Naive thymus-derived CD4-positive, alpha-beta T cell (primary cell): ENCODE measurements at regions of chr12 and their contacts with region 1.

Region 1: GRCh38 chr12:127496255-127496654 is 770.7 kb upstream of the TMEM132C start:
- DNase-seq: no peak
- ATAC-seq: no peak
- H3K4me3 ChIP-seq: no peak overlapping the region
- H3K4me3 Mint-ChIP-seq: no peak overlapping the region
- H3K27ac ChIP-seq: no peak overlapping the region
- H3K27ac Mint-ChIP-seq: no peak overlapping the region
- H3K4me1 ChIP-seq: no peaks in the 10 kb centered on the region
- H3K4me1 Mint-ChIP-seq: peaks cover 0 to 10% (median 0%) of the 10 kb centered on the region in 7 donors
- H3K27me3 ChIP-seq: no peaks in the 10 kb centered on the region
- H3K27me3 Mint-ChIP-seq: no peaks in the 10 kb centered on the region

Region 2: DNA sequence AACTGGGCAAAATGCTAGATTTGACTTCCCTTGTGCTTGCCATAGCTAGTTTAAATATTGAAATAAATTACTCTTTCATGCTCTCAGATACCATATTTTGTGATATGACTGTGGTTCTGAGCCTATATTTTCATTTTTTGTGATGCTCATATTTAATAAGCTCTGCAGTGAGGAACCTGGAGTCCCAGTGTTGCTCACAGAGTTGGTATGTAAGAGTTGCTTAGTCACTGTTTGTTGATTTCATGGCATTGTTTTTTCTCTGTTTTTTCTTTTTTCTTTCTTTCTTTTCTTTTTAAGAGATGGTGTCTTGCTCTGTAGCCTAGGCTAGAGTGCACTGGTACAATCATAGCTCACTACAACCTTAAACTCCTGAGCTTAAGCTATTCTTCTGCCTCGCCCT is 20.2 kb after region 1 on chr12:
- CTCF ChIA-PET with region 1: no interaction called
- POLR2A ChIA-PET with region 1: no interaction called
- intact Hi-C with region 1: loop called in 1 of 2 experiments (anchors 1 kb)
- DNase-seq: no peak
- ATAC-seq: no peak
- H3K4me3 ChIP-seq: no peak overlapping the region
- H3K4me3 Mint-ChIP-seq: no peak overlapping the region
- H3K27ac ChIP-seq: no peak overlapping the region
- H3K27ac Mint-ChIP-seq: no peak overlapping the region
- H3K4me1 ChIP-seq: no peaks in the 10 kb centered on the region
- H3K4me1 Mint-ChIP-seq: no peaks in the 10 kb centered on the region
- H3K27me3 ChIP-seq: no peaks in the 10 kb centered on the region
- H3K27me3 Mint-ChIP-seq: peaks cover 0 to 4% (median 0%) of the 10 kb centered on the region in 5 donors